IMR-90 (cell line): ENCODE measurements at regions of chr17 and their contacts with region 1.

Region 1: DNA sequence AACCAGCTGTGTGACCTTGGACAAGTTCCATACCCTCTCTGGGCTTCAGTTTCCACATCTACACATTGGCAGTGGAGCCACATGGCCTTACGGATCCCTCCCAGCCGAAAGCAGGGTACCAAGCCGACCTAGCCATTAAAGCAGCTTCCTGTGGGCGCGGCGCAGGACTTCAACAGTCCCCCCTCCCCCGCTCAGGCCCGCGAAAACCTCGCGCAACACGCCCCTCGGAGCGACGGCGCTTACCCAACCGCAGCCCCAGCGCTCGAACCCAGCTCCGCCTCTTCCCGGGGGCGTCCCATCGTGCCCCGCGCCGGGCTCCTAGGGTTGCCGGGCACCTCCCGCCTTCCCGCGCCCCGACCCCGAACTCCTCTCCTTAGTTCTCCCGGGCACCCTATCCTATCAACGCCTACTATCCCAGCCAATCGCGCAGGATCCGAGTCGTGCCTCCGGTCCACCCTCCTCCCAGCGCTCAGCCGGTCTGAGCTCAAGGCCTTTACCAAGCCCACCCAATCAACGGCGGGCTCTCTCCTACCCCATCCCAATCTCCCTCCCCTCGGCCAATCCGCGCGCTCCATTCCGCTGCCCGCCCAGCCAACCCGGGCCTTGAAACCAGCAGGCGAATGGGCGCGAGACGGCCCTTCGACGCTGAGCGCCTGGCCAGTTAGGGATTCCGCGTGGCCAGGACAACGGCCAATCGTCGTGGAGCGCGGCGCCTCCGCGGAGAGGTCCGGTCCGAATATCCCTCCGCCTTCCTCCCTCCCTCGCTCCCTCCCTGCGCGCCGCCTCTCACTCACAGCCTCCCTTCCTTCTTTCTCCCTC is at the start of gene KPNB1:
- DNase-seq: peak; percentile 100
- ATAC-seq: peak; percentile 86
- H3K4me3 ChIP-seq: peak within 1 kb of the TSS; percentile 93
- H3K27ac ChIP-seq: peak within 1 kb of the TSS; percentile 99
- H3K4me1 ChIP-seq: 0 out of 2 replicates have a peak, but pooled peaks cover 3% of the 10 kb centered on the region
- H3K27me3 ChIP-seq: no peaks in the 10 kb centered on the region
- CTCF ChIP-seq: no peak
- POLR2A ChIP-seq: peak; percentile 57
- RAD21 ChIP-seq: no peak
- total RNA-seq, gene KPNB1: 659 and 1,082 TPM in 2 replicates

Region 2: DNA sequence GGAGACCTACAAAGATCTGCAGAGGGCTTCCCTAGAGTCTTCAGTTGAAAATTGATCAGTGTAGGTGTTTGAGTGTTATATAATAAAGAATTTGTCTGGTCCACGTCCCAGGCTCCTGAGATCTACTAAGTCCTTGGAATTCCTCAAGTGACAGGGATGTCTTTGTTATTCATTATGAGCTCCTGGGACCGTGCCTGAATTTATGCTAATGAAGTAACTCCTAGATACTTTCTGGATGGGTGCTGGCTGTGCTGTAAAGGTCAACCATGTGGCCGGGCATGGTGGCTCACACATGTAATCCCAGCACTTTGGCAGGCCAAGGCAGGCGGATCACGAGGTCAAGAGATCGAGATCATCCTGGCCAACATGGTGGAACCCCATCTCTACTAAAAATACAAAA is 504.0 kb before region 1 on chr17:
- CTCF ChIA-PET with region 1: no interaction called
- POLR2A ChIA-PET with region 1: no interaction called
- dilution Hi-C with region 1: no loop called
- in situ Hi-C with region 1: loop called (anchors 10 kb)
- intact Hi-C with region 1: no loop called
- DNase-seq: no peak
- ATAC-seq: no peak
- H3K4me3 ChIP-seq: no peak overlapping the region
- H3K27ac ChIP-seq: no peak overlapping the region
- H3K4me1 ChIP-seq: no peaks in the 10 kb centered on the region
- H3K27me3 ChIP-seq: no peaks in the 10 kb centered on the region
- CTCF ChIP-seq: no peak
- POLR2A ChIP-seq: no peak
- RAD21 ChIP-seq: no peak

Region 3: GRCh38 chr17:47621293-47622178 is 27.8 kb before region 1 on chr17:
- CTCF ChIA-PET with region 1: interaction called, 5 read pairs
- POLR2A ChIA-PET with region 1: interaction called, 8 read pairs
- dilution Hi-C with region 1: no loop called
- in situ Hi-C with region 1: no loop called
- intact Hi-C with region 1: loop called (anchors 2 kb)
- DNase-seq: peak; percentile 91
- ATAC-seq: peak; percentile 93
- H3K4me3 ChIP-seq: no peak overlapping the region
- H3K27ac ChIP-seq: peak overlapping the region; percentile 63
- H3K4me1 ChIP-seq: peaks cover 13% of the 10 kb centered on the region
- H3K27me3 ChIP-seq: no peaks in the 10 kb centered on the region
- CTCF ChIP-seq: no peak
- POLR2A ChIP-seq: no peak
- RAD21 ChIP-seq: no peak

Region 4: DNA sequence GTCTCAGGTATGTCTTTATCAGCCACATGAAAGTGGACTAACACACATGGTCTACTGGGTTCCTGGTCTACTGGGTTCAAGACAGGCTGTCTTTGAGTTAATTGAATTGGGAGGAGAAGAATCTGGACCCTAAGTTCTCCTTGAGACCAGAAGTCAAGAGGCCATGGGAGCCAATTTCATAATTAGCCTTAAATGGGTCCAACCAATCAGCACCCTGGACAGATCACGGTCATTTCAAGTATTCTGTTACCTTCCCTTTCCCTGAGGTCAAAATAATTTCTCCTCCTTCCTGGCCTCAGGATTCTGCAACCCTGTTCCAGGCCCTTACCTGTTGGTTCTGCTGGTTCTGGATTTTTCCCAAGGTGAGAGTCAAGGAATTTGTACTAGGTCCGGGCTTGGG is 148.4 kb after region 1 on chr17:
- CTCF ChIA-PET with region 1: no interaction called
- POLR2A ChIA-PET with region 1: no interaction called
- dilution Hi-C with region 1: no loop called
- in situ Hi-C with region 1: no loop called
- intact Hi-C with region 1: loop called (anchors 5 kb)
- DNase-seq: no peak
- ATAC-seq: no peak
- H3K4me3 ChIP-seq: no peak overlapping the region
- H3K27ac ChIP-seq: no peak overlapping the region
- H3K4me1 ChIP-seq: no peaks in the 10 kb centered on the region
- H3K27me3 ChIP-seq: peaks cover 41% of the 10 kb centered on the region
- CTCF ChIP-seq: no peak
- POLR2A ChIP-seq: no peak
- RAD21 ChIP-seq: no peak

Region 5: DNA sequence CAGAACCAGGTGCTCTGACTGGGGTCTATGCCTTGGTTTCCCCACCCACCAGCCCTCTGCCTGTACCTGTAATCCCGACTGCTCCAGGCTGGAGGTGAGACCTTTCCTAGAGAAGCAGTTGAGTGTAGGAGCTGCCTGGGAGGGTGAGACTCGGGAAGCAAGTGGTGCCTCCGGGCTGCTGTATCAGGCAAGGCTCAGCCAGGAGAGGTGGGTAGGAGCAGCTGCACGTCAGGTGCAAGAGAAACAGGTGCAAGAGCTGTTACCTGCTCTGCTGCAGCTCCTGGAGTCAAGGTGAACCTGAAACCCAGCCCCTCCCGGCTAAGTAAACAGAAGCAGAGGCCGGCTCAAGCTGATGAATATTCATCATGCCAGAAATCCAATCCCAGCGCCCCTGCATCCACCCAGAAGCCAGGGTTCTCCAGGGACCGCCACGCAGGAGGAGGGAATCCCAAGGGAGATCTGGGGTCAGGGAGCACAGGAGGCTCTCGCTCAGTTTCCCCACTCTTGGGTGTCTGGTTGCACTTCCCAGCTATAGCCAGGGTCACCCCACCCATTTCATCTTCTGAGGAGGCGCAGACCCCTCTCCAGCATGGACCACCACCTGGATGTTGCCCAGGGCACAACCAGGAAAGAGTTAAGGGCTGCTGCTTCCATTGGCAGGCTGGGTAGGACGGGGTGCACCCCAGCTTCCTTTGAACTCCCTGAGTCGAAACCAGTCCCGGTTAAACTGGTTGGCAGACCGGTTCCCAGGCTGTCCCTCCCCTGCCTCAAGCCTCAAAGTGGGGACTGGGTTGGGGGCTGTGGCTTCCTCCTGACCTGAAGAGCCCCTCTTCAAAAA is 308.4 kb after region 1 on chr17 and contains the start of gene PRR15L:
- CTCF ChIA-PET with region 1: no interaction called
- POLR2A ChIA-PET with region 1: no interaction called
- dilution Hi-C with region 1: no loop called
- in situ Hi-C with region 1: no loop called
- intact Hi-C with region 1: no loop called
- DNase-seq: no peak
- ATAC-seq: peak; percentile 21; the same call in 1 of the 2 replicates
- H3K4me3 ChIP-seq: no peak within 1 kb of the TSS
- H3K27ac ChIP-seq: no peak within 1 kb of the TSS
- H3K4me1 ChIP-seq: peaks cover 5% of the 10 kb centered on the region; the same call in 1 of the 2 replicates
- H3K27me3 ChIP-seq: peaks cover 8% of the 10 kb centered on the region
- CTCF ChIP-seq: no peak
- POLR2A ChIP-seq: no peak
- RAD21 ChIP-seq: no peak
- total RNA-seq, gene PRR15L: not detected in 2 replicates